CD4-positive, alpha-beta T cell (primary cell): ENCODE measurements at regions of chr3 and their contacts with region 1.

Region 1: DNA sequence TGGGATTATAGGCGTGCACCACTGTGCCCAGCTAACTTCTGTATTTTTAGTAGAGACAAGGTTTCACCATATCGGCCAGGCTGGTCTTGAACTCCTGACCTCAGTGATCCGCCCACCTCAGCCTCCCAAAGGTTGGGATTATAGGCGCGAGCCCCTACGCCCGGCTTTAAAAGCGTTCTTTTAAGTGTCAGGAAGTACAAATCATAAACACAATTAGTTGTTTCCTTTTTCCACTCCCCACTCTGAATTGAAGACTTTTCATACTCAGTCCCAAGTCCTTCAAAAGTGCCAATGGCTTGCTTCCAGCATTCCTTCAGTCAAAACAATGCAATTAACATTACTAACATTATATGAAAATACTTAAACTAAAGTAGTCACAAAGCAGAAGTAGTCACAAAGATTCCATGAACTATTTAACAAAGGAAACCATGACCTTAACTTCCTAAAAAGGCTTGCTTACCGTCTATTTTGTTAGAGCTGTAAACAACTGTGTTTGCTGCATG is 8.1 kb downstream of the WDR82 start:
- DNase-seq: no peak
- ATAC-seq: no peak
- H3K4me3 ChIP-seq: peak overlapping the region; percentile 44
- H3K4me3 Mint-ChIP-seq: peak overlapping the region; percentile 87
- H3K27ac ChIP-seq: peak overlapping the region; percentile 70 to 75
- H3K27ac Mint-ChIP-seq: peak overlapping the region; percentile 92
- H3K4me1 ChIP-seq: peaks cover 67% of the 10 kb centered on the region
- H3K4me1 Mint-ChIP-seq: peaks cover 91% of the 10 kb centered on the region
- H3K27me3 ChIP-seq: no peaks in the 10 kb centered on the region
- H3K27me3 Mint-ChIP-seq: no peaks in the 10 kb centered on the region
- CTCF ChIP-seq: no peak

Region 2: GRCh38 chr3:52238761-52239701 is 31.3 kb before region 1 on chr3 and contains the start of gene TWF2:
- CTCF ChIA-PET with region 1: interaction called, 10 read pairs
- POLR2A ChIA-PET with region 1: interaction called, 538 read pairs
- intact Hi-C with region 1: loop called in 1 of 2 experiments (anchors 2 kb)
- DNase-seq: peak; percentile 69 to 93 (median 84)
- ATAC-seq: peak; percentile 79
- H3K4me3 ChIP-seq: peak within 1 kb of the TSS; percentile 99
- H3K4me3 Mint-ChIP-seq: peak within 1 kb of the TSS; percentile 99
- H3K27ac ChIP-seq: peak within 1 kb of the TSS; percentile 81 to 95
- H3K27ac Mint-ChIP-seq: peak within 1 kb of the TSS; percentile 99
- H3K4me1 ChIP-seq: peaks cover 80% of the 10 kb centered on the region
- H3K4me1 Mint-ChIP-seq: peaks cover 86% of the 10 kb centered on the region
- H3K27me3 ChIP-seq: no peaks in the 10 kb centered on the region
- H3K27me3 Mint-ChIP-seq: no peaks in the 10 kb centered on the region
- CTCF ChIP-seq: peak; percentile 63
- total RNA-seq, gene TWF2: 17.4 to 21.7 TPM

Region 3: GRCh38 chr3:52245322-52246263 is 24.7 kb before region 1 on chr3 and contains the start of gene PPM1M:
- CTCF ChIA-PET with region 1: interaction called, 10 read pairs
- POLR2A ChIA-PET with region 1: interaction called, 538 read pairs
- intact Hi-C with region 1: no loop called
- DNase-seq: peak in 13 of 14 experiments; percentile 28 to 90 (median 65)
- ATAC-seq: peak; percentile 64
- H3K4me3 ChIP-seq: peak within 1 kb of the TSS; percentile 91
- H3K4me3 Mint-ChIP-seq: peak within 1 kb of the TSS; percentile 88
- H3K27ac ChIP-seq: peak within 1 kb of the TSS; percentile 90 to 95
- H3K27ac Mint-ChIP-seq: peak within 1 kb of the TSS; percentile 95
- H3K4me1 ChIP-seq: peaks cover 82% of the 10 kb centered on the region
- H3K4me1 Mint-ChIP-seq: peaks cover 87% of the 10 kb centered on the region
- H3K27me3 ChIP-seq: no peaks in the 10 kb centered on the region
- H3K27me3 Mint-ChIP-seq: no peaks in the 10 kb centered on the region
- CTCF ChIP-seq: no peak
- total RNA-seq, gene PPM1M: 36.7 to 40.2 TPM

Region 4: GRCh38 chr3:52253314-52254304 is 16.7 kb before region 1 on chr3:
- CTCF ChIA-PET with region 1: interaction called, 27 read pairs
- POLR2A ChIA-PET with region 1: interaction called, 538 read pairs
- intact Hi-C with region 1: loop called (anchors 1 to 2 kb)
- DNase-seq: peak; percentile 73 to 95 (median 82)
- ATAC-seq: peak; percentile 83
- H3K4me3 ChIP-seq: peak overlapping the region; percentile 30
- H3K4me3 Mint-ChIP-seq: peak overlapping the region; percentile 89
- H3K27ac ChIP-seq: peak overlapping the region; percentile 82 to 89
- H3K27ac Mint-ChIP-seq: peak overlapping the region; percentile 95
- H3K4me1 ChIP-seq: peaks cover 100% of the 10 kb centered on the region
- H3K4me1 Mint-ChIP-seq: peaks cover 93% of the 10 kb centered on the region
- H3K27me3 ChIP-seq: no peaks in the 10 kb centered on the region
- H3K27me3 Mint-ChIP-seq: no peaks in the 10 kb centered on the region
- CTCF ChIP-seq: no peak

Region 5: DNA sequence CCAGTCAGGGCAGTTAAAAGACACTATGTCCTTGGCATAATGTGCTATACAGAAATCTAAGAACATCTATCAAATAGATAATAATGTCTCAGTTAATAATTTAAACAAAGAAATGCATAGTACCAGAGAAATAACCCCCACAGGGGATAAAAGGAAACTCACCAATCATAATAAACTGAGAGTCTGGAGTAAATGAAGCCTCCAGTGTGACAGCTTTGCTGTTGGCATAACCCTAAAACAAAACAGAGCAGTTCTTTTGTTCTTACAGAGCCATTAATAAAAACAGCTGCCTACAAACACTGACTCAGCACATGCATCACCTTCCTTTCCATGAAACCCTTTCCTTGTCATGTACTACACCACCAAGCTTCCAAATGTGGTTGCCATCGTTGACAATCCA is 11.3 kb before region 1 on chr3:
- CTCF ChIA-PET with region 1: interaction called, 27 read pairs
- POLR2A ChIA-PET with region 1: interaction called, 538 read pairs
- intact Hi-C with region 1: loop called (anchors 1 to 2 kb)
- DNase-seq: no peak
- ATAC-seq: no peak
- H3K4me3 ChIP-seq: no peak overlapping the region
- H3K4me3 Mint-ChIP-seq: no peak overlapping the region
- H3K27ac ChIP-seq: peak overlapping the region in 1 of 2 donors; percentile 49
- H3K27ac Mint-ChIP-seq: peak overlapping the region; percentile 95
- H3K4me1 ChIP-seq: peaks cover 78% of the 10 kb centered on the region
- H3K4me1 Mint-ChIP-seq: peaks cover 98% of the 10 kb centered on the region
- H3K27me3 ChIP-seq: no peaks in the 10 kb centered on the region
- H3K27me3 Mint-ChIP-seq: no peaks in the 10 kb centered on the region
- CTCF ChIP-seq: no peak